GM10248 (cell line): ENCODE measurements at regions of chr1 and their contacts with region 1.

Region 1: GRCh38 chr1:153494976-153495535 is 34.6 kb upstream of the S100A7 start:
- DNase-seq: peak; percentile 65
- CTCF ChIP-seq: peak; percentile 86

Region 2: GRCh38 chr1:153312570-153313193 is 182.4 kb before region 1 on chr1 and contains the start of gene PGLYRP3:
- CTCF ChIA-PET with region 1: interaction called, 17 read pairs
- POLR2A ChIA-PET with region 1: no interaction called
- DNase-seq: no peak
- CTCF ChIP-seq: peak; percentile 10

Region 3: DNA sequence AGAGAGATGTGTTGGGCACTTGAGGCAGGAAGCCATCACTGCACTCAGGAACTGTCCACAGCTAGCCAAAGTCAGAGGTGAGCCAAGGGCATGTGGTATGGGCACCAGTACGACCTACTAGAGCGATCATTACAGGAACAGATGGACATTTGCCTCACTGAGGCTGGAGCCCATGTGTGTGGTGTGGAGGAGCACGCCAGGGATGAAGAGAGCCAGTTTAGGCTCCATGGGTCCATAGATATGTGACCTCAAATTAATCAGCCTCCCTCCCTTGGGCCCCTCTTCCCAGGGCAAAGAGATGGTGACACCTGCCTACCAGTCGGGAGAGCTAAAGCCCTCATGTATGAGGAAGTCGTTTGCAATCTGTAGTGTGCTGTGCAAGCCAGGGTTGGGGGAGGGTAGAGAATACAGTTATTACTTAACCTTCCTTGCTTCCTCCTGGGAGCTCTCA is 150.5 kb before region 1 on chr1:
- CTCF ChIA-PET with region 1: interaction called, 331 read pairs
- POLR2A ChIA-PET with region 1: no interaction called
- DNase-seq: peak; percentile 18
- CTCF ChIP-seq: no peak

Region 4: GRCh38 chr1:153365303-153366095 is 129.6 kb before region 1 on chr1:
- CTCF ChIA-PET with region 1: interaction called, 13 read pairs
- POLR2A ChIA-PET with region 1: no interaction called
- DNase-seq: no peak
- CTCF ChIP-seq: no peak